ENCODE measurements at regions of chr2 and their contacts with region 1.

Region 1: GRCh38 chr2:177254433-177255226 is 9.9 kb downstream of the NFE2L2 start:
- DNase-seq: no peak
- ATAC-seq: no peak
- H3K4me3 Mint-ChIP-seq: no peak overlapping the region
- H3K27ac Mint-ChIP-seq: peak overlapping the region; percentile 10
- H3K4me1 Mint-ChIP-seq: peaks cover 88% of the 10 kb centered on the region
- H3K27me3 Mint-ChIP-seq: no peaks in the 10 kb centered on the region

Region 2: GRCh38 chr2:176978921-176979320 is 275.7 kb before region 1 on chr2:
- CTCF ChIA-PET with region 1: no interaction called
- POLR2A ChIA-PET with region 1: no interaction called
- DNase-seq: no peak
- ATAC-seq: no peak
- H3K4me3 Mint-ChIP-seq: no peak overlapping the region
- H3K27ac Mint-ChIP-seq: no peak overlapping the region
- H3K4me1 Mint-ChIP-seq: no peaks in the 10 kb centered on the region
- H3K27me3 Mint-ChIP-seq: peaks cover 12% of the 10 kb centered on the region

Region 3: GRCh38 chr2:177118636-177119035 is 136.0 kb before region 1 on chr2:
- CTCF ChIA-PET with region 1: no interaction called
- POLR2A ChIA-PET with region 1: no interaction called
- DNase-seq: no peak
- ATAC-seq: no peak
- H3K4me3 Mint-ChIP-seq: no peak overlapping the region
- H3K27ac Mint-ChIP-seq: no peak overlapping the region
- H3K4me1 Mint-ChIP-seq: no peaks in the 10 kb centered on the region
- H3K27me3 Mint-ChIP-seq: peaks cover 13% of the 10 kb centered on the region

Region 4: DNA sequence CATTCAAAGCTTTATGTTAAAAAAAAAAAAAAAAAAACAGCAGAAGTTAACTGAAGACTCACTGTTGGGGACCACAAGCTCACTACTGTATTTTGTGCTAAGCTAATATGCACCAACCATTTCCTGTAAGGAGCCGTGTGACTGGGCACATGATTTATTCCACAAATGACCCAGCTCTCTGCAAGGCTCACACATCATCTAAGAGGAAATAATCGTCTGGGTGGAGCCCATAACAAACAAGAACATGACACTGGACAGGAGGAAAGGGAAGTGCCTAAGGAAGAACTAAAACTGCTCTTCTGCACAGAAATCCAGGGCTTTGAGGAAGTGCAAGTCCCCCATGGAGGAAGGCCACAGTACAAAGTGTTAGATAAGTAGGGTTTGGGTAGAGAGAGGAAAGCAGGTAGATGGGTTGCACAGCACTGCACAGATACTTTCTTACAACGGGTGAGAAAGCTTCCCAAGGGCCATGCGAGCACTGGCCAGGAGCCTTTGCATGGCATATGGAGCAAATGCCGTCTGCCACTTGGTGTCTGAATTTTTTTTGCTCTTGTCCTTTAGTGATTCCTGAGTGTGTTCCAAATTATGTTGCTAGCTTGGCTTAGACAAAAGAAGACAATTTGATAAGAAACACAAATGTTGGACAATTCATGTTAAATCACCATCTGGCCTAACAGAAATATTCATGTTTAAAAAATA is 14.5 kb before region 1 on chr2:
- CTCF ChIA-PET with region 1: interaction called, 17 read pairs
- POLR2A ChIA-PET with region 1: no interaction called
- DNase-seq: peak; percentile 64
- ATAC-seq: peak; percentile 86
- H3K4me3 Mint-ChIP-seq: peak overlapping the region; percentile 25
- H3K27ac Mint-ChIP-seq: peak overlapping the region; percentile 88
- H3K4me1 Mint-ChIP-seq: peaks cover 68% of the 10 kb centered on the region
- H3K27me3 Mint-ChIP-seq: no peaks in the 10 kb centered on the region

Measured in activated CD8-positive, alpha-beta T cell treated with anti-CD3 and anti-CD28 coated beads, Interleukin-2, amount 10 ng/mL, durations not matched to agents 7 days and 5 days (primary cell).